ENCODE measurements at regions of chr17 and their contacts with region 1.

Region 1: DNA sequence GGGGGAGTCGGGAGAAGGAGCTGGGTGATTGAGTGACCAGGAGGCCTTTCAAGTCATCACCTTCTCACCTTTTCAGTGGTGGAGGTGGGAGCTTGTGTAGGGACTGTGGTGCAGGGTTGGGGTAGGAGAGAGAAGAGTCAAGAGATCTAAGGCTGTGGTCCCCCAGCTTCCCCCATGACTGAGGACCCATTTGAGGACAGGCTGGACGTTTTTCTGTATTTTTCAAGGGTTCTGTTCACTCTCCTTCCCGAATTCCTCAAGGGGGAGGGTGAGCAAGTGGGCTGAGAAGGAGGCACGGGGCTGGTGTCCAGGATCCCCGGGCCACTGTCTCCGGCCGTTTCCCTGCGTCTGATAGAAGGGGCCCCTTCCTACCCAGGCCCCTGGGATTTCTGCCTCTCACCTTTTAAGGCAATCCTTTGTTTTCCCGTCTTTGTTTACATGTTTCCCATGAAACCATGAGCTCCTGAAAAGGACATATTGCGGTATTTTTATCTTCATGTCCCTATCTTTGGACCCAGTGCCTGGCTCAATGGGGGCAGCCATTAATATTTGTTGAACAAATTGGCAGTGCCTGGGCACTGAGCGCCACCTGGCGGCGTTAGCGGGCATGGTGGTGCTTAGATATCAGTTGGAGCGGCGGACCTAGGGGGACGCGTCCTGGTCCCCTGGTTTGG is 9.2 kb upstream of the CD300A start:
- DNase-seq: peak; percentile 73
- ATAC-seq: peak; percentile 45
- H3K4me3 Mint-ChIP-seq: no peak overlapping the region
- H3K27ac Mint-ChIP-seq: no peak overlapping the region
- H3K4me1 Mint-ChIP-seq: peaks cover 6% of the 10 kb centered on the region
- H3K27me3 Mint-ChIP-seq: peaks cover 13% of the 10 kb centered on the region
- CTCF ChIP-seq: no peak

Region 2: GRCh38 chr17:74203439-74204240 is 253.6 kb before region 1 on chr17 and contains the start of gene RPL38:
- CTCF ChIA-PET with region 1: no interaction called
- POLR2A ChIA-PET with region 1: no interaction called
- intact Hi-C with region 1: loop called (anchors 1 kb)
- DNase-seq: peak; percentile 90
- ATAC-seq: peak; percentile 94
- H3K4me3 Mint-ChIP-seq: peak within 1 kb of the TSS; percentile 100
- H3K27ac Mint-ChIP-seq: peak within 1 kb of the TSS; percentile 98
- H3K4me1 Mint-ChIP-seq: peaks cover 47% of the 10 kb centered on the region
- H3K27me3 Mint-ChIP-seq: peaks cover 23% of the 10 kb centered on the region
- CTCF ChIP-seq: no peak
- total RNA-seq, gene RPL38: 1,330 and 1,676 TPM in 2 replicates

Region 3: GRCh38 chr17:74296548-74296936 is 160.7 kb before region 1 on chr17:
- CTCF ChIA-PET with region 1: interaction called, 3 read pairs
- POLR2A ChIA-PET with region 1: no interaction called
- intact Hi-C with region 1: loop called (anchors 1 kb)
- DNase-seq: no peak
- ATAC-seq: no peak
- H3K4me3 Mint-ChIP-seq: no peak overlapping the region
- H3K27ac Mint-ChIP-seq: no peak overlapping the region
- H3K4me1 Mint-ChIP-seq: no peaks in the 10 kb centered on the region
- H3K27me3 Mint-ChIP-seq: peaks cover 25% of the 10 kb centered on the region
- CTCF ChIP-seq: no peak

Region 4: GRCh38 chr17:74379495-74380085 is 77.7 kb before region 1 on chr17:
- CTCF ChIA-PET with region 1: interaction called, 100 read pairs
- POLR2A ChIA-PET with region 1: interaction called, 4 read pairs
- intact Hi-C with region 1: loop called (anchors 1 kb)
- DNase-seq: peak; percentile 80
- ATAC-seq: peak; percentile 90
- H3K4me3 Mint-ChIP-seq: no peak overlapping the region
- H3K27ac Mint-ChIP-seq: no peak overlapping the region
- H3K4me1 Mint-ChIP-seq: peaks cover 2% of the 10 kb centered on the region
- H3K27me3 Mint-ChIP-seq: peaks cover 26% of the 10 kb centered on the region
- CTCF ChIP-seq: no peak

Region 5: DNA sequence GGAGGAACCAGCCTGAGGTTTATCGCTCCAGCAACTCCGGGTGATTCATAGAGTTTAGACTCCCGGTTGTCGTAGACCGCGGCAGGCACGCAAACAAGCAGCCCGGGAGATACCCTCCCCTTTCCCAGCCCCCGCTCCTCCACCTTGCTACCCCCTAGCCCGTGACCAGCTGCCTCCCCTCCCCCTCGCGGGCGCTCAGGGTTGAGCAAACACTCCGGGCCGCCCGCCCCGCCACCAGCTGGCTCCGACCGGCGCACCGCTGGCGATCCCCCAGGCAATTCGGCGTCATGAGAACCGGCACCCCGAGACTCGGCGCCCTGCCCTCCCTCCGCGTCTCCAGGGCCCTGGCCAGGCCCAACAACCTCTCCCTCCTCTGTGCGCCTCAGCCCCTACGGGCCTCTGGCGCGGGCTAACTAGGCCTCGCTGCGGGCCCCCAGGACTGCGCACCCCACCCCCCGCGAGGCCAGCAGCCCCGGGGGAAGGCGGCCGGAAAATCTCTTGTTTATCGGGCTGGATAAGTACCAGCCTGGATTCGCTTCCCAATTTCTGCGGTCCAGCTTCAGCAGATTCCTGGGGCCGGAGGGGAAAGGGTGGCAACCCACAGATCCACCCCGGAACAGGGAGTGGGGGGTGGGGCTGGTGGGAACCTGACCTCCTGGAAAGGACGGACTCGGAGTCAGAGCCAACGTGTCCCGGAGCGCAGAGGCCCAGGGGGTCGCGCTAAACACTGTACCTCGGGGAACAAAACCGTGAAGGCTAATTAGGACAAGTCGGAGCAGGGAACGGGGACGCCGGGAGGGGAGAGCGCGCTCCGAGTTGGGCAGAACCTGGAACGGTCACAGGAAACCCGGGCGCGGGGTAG is 26.3 kb before region 1 on chr17:
- CTCF ChIA-PET with region 1: interaction called, 7 read pairs
- POLR2A ChIA-PET with region 1: interaction called, 13 read pairs
- intact Hi-C with region 1: loop called (anchors 2 kb)
- DNase-seq: peak; percentile 65
- ATAC-seq: peak; percentile 85
- H3K4me3 Mint-ChIP-seq: peak overlapping the region; percentile 73
- H3K27ac Mint-ChIP-seq: peak overlapping the region; percentile 88
- H3K4me1 Mint-ChIP-seq: peaks cover 21% of the 10 kb centered on the region
- H3K27me3 Mint-ChIP-seq: peaks cover 47% of the 10 kb centered on the region
- CTCF ChIP-seq: no peak

Region 6: GRCh38 chr17:74528491-74529199 is 71.4 kb after region 1 on chr17:
- CTCF ChIA-PET with region 1: interaction called, 11 read pairs
- POLR2A ChIA-PET with region 1: no interaction called
- intact Hi-C with region 1: loop called (anchors 2 kb)
- DNase-seq: peak; percentile 12
- ATAC-seq: peak; percentile 89
- H3K4me3 Mint-ChIP-seq: no peak overlapping the region
- H3K27ac Mint-ChIP-seq: peak overlapping the region; percentile 27
- H3K4me1 Mint-ChIP-seq: peaks cover 32% of the 10 kb centered on the region
- H3K27me3 Mint-ChIP-seq: peaks cover 7% of the 10 kb centered on the region
- CTCF ChIP-seq: no peak

Region 7: GRCh38 chr17:74646231-74646630 is 188.9 kb after region 1 on chr17:
- CTCF ChIA-PET with region 1: no interaction called
- POLR2A ChIA-PET with region 1: no interaction called
- intact Hi-C with region 1: loop called (anchors 1 kb)
- DNase-seq: no peak
- ATAC-seq: peak; percentile 45
- H3K4me3 Mint-ChIP-seq: no peak overlapping the region
- H3K27ac Mint-ChIP-seq: peak overlapping the region; percentile 31
- H3K4me1 Mint-ChIP-seq: peaks cover 46% of the 10 kb centered on the region
- H3K27me3 Mint-ChIP-seq: peaks cover 34% of the 10 kb centered on the region
- CTCF ChIP-seq: no peak